ENCODE measurements at regions of chr18 and their contacts with region 1.

Region 1: DNA sequence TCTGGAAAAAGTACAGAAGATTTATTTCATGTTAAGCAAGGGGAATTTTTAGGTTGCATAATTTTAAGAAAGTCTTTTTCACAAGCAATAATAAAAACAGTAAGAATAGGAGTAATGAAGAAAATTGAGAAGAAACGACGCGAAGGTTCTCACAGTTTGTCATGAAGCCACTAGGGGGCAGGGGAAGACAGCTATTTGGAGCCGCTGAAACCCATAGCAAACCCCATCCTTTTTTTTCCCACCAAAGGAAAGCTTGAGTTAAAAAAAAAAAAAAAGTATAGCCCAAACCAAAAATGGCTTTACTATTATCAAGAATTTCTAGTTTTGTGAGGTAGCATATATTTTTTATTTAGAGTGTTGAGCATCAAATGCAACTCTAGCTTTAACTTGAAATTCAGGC is 300.9 kb downstream of the PHLPP1 start:
- DNase-seq: peak; percentile 53
- H3K4me3 Mint-ChIP-seq: no peak overlapping the region
- H3K27ac Mint-ChIP-seq: no peak overlapping the region
- H3K4me1 Mint-ChIP-seq: no peaks in the 10 kb centered on the region
- H3K27me3 Mint-ChIP-seq: peaks cover 50% of the 10 kb centered on the region

Region 2: DNA sequence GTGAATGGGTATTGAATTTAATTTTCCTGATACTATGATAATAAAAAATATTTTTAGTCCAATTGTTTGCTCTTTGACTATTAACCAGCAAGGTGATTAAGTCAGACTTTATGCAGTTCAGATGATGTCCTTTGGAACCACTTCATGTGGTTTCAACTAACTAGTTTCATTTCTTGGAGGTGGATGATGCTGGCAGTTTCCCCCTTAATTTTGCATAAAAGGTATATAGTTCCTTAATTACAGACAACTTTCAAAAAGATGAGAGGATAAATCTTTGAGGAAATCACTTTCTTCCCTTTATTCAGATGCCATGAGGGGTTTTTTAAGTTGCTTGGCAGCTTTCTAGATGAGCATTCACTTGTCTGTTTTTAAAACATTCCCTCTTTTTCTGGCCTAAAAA is 77.8 kb before region 1 on chr18:
- CTCF ChIA-PET with region 1: no interaction called
- POLR2A ChIA-PET with region 1: no interaction called
- DNase-seq: no peak
- H3K4me3 Mint-ChIP-seq: no peak overlapping the region
- H3K27ac Mint-ChIP-seq: no peak overlapping the region
- H3K4me1 Mint-ChIP-seq: peaks cover 8% of the 10 kb centered on the region
- H3K27me3 Mint-ChIP-seq: no peaks in the 10 kb centered on the region

Region 3: GRCh38 chr18:63073481-63073880 is 57.2 kb after region 1 on chr18:
- CTCF ChIA-PET with region 1: interaction called, 11 read pairs
- POLR2A ChIA-PET with region 1: no interaction called
- DNase-seq: no peak
- H3K4me3 Mint-ChIP-seq: no peak overlapping the region
- H3K27ac Mint-ChIP-seq: no peak overlapping the region
- H3K4me1 Mint-ChIP-seq: peaks cover 13% of the 10 kb centered on the region
- H3K27me3 Mint-ChIP-seq: peaks cover 34% of the 10 kb centered on the region

Region 4: DNA sequence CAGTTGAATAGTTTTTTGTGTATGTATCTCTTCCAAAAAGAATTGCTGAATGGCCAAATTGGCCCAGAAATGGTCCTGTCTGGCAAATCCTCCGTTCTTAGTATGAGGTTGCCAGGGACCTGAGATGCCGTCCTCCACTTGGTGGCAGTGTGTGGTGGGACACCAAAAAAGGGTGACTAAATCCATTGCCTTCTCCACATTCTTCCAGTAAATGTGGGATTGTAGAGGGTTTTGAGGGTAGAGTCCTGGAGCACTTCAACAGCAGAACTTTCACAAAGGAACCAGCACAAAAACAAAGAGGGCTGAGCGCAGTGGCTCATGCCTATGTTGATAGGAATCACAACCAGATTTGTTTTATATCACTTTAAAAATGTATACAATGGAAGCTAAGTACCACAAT is 103.4 kb after region 1 on chr18:
- CTCF ChIA-PET with region 1: interaction called, 18 read pairs
- POLR2A ChIA-PET with region 1: no interaction called
- DNase-seq: no peak
- H3K4me3 Mint-ChIP-seq: no peak overlapping the region
- H3K27ac Mint-ChIP-seq: no peak overlapping the region
- H3K4me1 Mint-ChIP-seq: peaks cover 1% of the 10 kb centered on the region
- H3K27me3 Mint-ChIP-seq: peaks cover 39% of the 10 kb centered on the region

Region 5: GRCh38 chr18:63131106-63131958 is 115.1 kb after region 1 on chr18:
- CTCF ChIA-PET with region 1: interaction called, 12 read pairs
- POLR2A ChIA-PET with region 1: no interaction called
- DNase-seq: peak; percentile 59
- H3K4me3 Mint-ChIP-seq: no peak overlapping the region
- H3K27ac Mint-ChIP-seq: no peak overlapping the region
- H3K4me1 Mint-ChIP-seq: peaks cover 37% of the 10 kb centered on the region
- H3K27me3 Mint-ChIP-seq: no peaks in the 10 kb centered on the region

Region 6: DNA sequence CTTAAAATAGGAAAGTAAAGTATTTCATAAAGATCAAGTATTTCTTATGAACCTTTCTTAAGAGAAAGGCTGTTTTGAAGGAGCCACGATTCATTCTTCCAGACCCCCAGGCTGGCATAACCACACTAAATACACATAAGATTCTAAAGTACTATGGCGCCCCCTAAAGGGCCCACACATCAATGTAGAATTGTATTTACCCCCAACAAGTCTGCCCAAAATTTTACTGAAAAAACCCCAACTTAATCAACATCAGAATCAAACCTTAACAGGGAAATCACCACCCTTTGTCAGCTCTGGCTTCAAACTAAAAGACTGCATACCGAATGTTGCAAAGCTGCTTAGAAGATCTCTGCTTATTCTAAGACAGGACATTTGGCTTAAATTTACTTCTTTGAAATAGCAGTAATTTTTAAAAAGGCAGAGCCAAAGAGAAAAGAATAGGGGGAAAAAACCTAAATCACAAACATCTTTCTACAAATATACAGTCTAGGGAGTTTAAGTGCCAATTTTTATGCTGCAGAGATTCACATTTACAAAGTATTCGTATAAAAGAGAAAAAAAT is 323.7 kb after region 1 on chr18:
- CTCF ChIA-PET with region 1: interaction called, 29 read pairs
- POLR2A ChIA-PET with region 1: no interaction called
- DNase-seq: peak; percentile 34
- H3K4me3 Mint-ChIP-seq: no peak overlapping the region
- H3K27ac Mint-ChIP-seq: no peak overlapping the region
- H3K4me1 Mint-ChIP-seq: peaks cover 7% of the 10 kb centered on the region
- H3K27me3 Mint-ChIP-seq: no peaks in the 10 kb centered on the region